ENCODE measurements at regions of chr11 and their contacts with region 1.

Region 1: GRCh38 chr11:47407746-47408590 is at the start of gene SLC39A13:
- DNase-seq: peak; percentile 86 to 99
- H3K4me3 ChIP-seq: peak within 1 kb of the TSS; percentile 90
- H3K27ac ChIP-seq: peak within 1 kb of the TSS; percentile 79
- H3K4me1 ChIP-seq: peaks cover 28% of the 10 kb centered on the region
- H3K27me3 ChIP-seq: no peaks in the 10 kb centered on the region
- CTCF ChIP-seq: peak; percentile 81
- total RNA-seq, gene SLC39A13: 28.8 and 32.3 TPM in 2 replicates

Region 2: DNA sequence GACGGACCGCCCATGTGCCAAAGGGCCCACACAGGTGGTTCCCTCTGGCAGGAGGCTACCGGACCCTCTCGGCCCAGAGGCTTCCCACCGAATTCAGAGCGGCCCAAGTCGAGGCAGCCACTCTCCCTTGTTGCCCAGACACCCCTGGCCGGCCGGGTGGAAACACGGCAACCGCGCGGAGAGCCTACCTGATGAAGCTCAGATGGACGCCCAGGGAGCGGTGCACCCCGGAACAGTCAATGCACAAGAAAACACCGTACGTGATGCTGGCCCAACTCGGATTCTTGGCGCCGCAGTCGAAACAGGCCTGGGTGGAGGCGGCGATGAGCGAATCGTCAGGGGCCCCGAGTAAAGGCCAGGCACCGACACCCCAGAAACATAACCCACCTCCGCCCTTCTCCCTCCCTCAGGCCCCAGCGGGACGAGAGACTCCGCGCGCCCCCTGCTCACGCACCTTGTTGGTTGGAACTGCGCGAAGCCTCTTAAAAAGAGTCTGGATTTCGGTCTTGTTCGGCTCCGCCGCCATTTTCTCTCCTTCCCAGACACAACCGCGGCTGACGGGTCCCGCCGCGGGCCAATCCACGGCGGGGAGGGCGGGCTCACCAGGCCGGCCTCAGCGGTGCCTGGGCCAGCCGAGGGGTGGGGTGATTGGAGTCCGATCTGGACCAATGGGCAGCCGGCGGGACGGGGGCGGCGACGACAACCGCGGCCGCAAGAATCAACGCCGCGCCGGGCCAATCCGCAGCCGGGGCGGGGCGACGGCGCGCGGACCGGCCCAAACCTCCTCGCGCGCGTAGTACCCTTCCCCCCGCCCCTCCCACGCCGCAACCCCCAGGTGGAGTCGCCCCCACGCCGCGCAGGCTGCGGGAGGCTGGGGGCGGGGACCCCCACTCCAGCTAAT is 231.4 kb before region 1 on chr11 and contains the start of gene ARFGAP2:
- CTCF ChIA-PET with region 1: no interaction called
- POLR2A ChIA-PET with region 1: no interaction called
- intact Hi-C with region 1: loop called (anchors 2 kb)
- DNase-seq: peak; percentile 85 to 97
- H3K4me3 ChIP-seq: peak within 1 kb of the TSS; percentile 95
- H3K27ac ChIP-seq: peak within 1 kb of the TSS; percentile 77
- H3K4me1 ChIP-seq: peaks cover 12% of the 10 kb centered on the region
- H3K27me3 ChIP-seq: no peaks in the 10 kb centered on the region
- CTCF ChIP-seq: no peak
- total RNA-seq, gene ARFGAP2: 122 and 130 TPM in 2 replicates

Region 3: DNA sequence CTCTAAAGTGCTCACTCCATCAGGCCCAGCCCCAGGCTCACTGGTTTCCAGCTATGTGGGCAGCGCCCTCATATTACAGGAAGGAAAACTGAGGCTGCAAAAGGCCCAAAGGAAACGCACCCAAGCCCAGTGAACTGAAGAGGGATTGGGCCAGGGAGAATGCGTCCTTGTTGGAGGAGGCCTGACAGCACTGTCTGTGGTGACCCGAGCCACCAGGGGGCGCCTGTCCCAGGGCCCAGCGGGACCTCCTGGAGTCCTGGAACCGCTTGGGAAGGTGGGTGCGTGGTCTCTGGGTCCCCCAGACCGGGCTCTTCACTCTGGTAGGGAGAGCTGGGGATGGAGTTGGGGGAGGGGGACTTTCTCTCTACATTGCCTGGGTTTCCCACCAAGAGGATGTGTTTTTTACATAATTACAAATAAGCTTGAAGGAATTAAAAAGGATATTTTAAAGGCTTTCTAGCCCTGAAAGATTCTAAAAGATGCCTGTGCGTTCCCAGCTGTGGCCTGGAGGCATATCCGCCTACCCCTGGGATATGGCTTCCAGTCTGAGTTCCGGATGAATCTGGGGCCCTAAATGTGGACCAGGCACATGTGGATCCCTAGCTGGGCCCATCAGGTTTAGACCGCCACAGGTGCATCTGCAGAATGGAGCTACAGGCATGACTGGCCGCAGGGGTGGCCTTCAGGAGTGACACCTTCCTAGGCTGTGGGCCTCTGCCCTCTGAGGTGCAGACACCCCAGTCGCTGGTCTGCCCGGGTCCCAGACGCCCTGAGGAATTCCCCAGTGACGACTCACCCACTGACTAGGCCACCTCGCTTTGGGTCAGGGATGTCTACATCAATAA is 33.9 kb before region 1 on chr11:
- CTCF ChIA-PET with region 1: interaction called, 14 read pairs
- POLR2A ChIA-PET with region 1: no interaction called
- intact Hi-C with region 1: loop called (anchors 1 kb)
- DNase-seq: peak in 1 of 2 experiments; percentile 76
- H3K4me3 ChIP-seq: no peak overlapping the region
- H3K27ac ChIP-seq: no peak overlapping the region
- H3K4me1 ChIP-seq: no peaks in the 10 kb centered on the region
- H3K27me3 ChIP-seq: no peaks in the 10 kb centered on the region
- CTCF ChIP-seq: peak; percentile 98

Region 4: DNA sequence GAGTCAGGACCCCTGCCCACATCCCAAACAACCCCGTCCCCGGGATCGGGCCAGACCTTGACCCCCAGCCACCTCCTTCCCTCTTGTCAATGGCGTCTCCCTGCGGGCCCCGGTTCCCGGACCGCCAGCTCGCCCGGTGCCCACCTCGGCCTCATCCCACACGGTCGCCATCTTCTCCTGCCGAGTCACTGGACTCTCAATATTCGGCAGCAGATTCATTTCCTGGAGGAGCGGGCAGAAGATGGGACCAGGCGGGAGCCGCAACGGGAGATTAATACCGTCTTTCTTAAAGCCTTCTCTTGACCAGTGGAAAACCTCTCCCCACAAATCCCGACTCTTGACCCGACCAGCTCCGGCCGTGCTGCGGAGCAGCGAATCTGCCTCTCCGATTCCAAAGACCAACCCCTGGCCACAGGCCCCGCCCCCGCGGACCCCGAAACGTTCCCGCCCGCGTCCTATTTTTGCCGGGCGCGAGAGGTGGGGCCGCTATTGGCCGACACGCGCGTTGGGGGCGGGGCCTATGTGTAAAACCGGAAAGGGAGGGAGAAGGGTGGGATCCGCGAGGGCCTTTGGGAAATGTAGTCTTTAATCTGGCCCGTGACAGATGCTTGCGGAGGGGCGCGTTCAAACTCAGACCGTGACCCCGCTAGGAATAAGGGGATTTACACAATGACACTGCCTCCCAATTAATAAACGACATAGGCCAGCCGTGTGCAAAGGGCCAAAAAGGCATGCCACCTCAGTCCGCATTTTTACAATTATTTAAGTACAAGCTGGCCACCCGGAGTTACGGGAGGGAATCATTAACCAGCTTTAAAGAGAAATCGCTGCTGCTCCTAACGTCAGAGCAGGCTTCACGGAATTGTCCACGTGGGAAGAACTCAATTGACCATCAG is 18.3 kb after region 1 on chr11 and contains the start of gene PSMC3:
- CTCF ChIA-PET with region 1: interaction called, 8 read pairs
- POLR2A ChIA-PET with region 1: interaction called, 7 read pairs
- intact Hi-C with region 1: loop called (anchors 1 kb)
- DNase-seq: peak; percentile 89 to 99
- H3K4me3 ChIP-seq: peak within 1 kb of the TSS; percentile 86
- H3K27ac ChIP-seq: peak within 1 kb of the TSS; percentile 73
- H3K4me1 ChIP-seq: peaks cover 18% of the 10 kb centered on the region
- H3K27me3 ChIP-seq: no peaks in the 10 kb centered on the region
- CTCF ChIP-seq: no peak
- total RNA-seq, gene PSMC3: 160 and 222 TPM in 2 replicates

Region 5: DNA sequence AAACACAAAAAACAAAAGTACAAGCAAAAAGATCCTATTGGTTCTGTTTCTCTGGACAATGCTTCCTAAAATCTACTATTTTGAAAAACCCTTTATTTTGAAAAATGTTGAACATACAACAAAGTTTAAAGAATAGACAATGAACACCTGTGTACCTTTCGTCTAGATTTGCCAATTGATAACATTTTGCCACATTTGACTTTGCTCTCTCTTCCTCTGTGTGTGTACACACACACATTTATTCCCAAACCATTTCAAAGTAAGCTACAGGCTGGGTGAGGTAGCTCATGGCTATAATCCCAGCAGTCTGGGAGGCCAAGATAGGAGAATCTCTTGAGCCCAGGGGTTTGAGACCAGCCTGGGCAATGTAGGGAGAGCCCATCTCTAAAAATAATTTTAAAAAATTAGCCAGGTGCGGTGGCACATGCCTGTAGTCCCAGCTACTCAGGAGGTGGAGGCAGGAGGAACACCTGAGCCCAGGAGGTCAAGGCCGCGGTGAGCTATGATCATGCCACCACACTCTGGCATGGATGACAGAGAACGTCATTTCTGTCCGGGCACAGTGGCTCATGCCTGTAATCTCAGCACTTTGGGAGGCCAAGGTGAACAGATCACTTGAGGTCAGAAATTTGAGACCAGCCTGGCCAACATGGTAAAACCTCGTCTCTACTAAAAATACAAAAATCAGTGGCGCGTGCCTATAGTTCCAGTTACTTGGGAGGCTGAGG is 23.6 kb after region 1 on chr11:
- CTCF ChIA-PET with region 1: interaction called, 10 read pairs
- POLR2A ChIA-PET with region 1: interaction called, 7 read pairs
- intact Hi-C with region 1: loop called (anchors 1 kb)
- DNase-seq: no peak
- H3K4me3 ChIP-seq: no peak overlapping the region
- H3K27ac ChIP-seq: no peak overlapping the region
- H3K4me1 ChIP-seq: peaks cover 8% of the 10 kb centered on the region; the same call in 1 of the 2 replicates
- H3K27me3 ChIP-seq: no peaks in the 10 kb centered on the region
- CTCF ChIP-seq: no peak

Region 6: GRCh38 chr11:47565340-47566148 is 157.6 kb after region 1 on chr11 and contains the start of gene PTPMT1:
- CTCF ChIA-PET with region 1: no interaction called
- POLR2A ChIA-PET with region 1: no interaction called
- intact Hi-C with region 1: loop called (anchors 5 kb)
- DNase-seq: peak; percentile 70 to 79
- H3K4me3 ChIP-seq: peak within 1 kb of the TSS; percentile 95
- H3K27ac ChIP-seq: peak within 1 kb of the TSS; percentile 55
- H3K4me1 ChIP-seq: peaks cover 11% of the 10 kb centered on the region
- H3K27me3 ChIP-seq: no peaks in the 10 kb centered on the region
- CTCF ChIP-seq: no peak
- total RNA-seq, gene PTPMT1: 74.8 and 79.0 TPM in 2 replicates

Measured in PC-9 (cell line).